ENCODE measurements at regions of chr11 and their contacts with region 1.

Region 1: DNA sequence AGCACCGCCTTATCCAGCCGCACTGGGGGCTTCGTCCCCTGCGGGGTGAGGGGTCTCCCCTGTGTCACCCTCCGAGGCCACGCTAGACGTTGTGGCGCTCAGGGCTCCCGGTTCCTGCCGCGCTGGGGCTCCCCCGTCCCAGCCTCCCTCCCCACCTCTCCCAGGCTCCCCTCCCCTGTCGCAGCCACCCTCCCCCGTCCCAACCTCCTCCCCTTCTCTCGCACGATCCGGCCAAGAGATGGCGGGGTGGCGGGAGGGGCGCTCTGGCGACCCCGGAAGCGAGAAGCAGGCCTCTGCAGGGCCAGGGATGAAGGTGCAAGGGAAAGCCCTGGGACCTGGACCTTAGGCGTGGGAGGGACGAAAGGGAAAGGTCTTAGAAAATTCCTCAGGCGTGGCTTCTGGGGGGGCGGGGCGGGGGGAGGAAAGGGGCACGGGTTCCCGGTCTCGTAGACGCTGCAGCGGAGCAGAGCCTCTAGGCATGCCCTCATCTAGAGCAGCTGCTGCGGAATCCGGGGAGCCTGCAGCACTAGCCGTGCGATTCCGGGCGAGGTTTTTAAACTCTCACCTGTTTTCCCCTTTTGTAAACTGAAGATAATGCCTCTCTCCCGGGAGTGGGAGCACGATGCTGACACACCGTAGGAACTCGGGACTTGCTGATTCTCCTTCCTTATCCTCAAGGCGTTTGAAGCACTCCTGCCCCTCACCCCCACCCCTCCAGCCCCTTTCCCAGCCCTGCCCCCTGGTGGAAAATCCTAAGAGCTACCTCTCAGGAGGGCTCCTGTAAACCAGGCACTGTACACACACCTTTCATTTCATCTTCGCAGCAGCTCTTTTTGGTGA is 14.4 kb downstream of the KCNJ5 start:
- DNase-seq: peak; percentile 67 to 68
- H3K4me3 ChIP-seq: peak overlapping the region; percentile 74
- H3K27ac ChIP-seq: no peak overlapping the region
- H3K4me1 ChIP-seq: peaks cover 20% of the 10 kb centered on the region
- H3K27me3 ChIP-seq: no peaks in the 10 kb centered on the region
- CTCF ChIP-seq: peak; percentile 75

Region 2: GRCh38 chr11:128924510-128925299 is 19.1 kb after region 1 on chr11:
- CTCF ChIA-PET with region 1: interaction called, 4 read pairs
- POLR2A ChIA-PET with region 1: interaction called, 21 read pairs
- intact Hi-C with region 1: no loop called
- DNase-seq: no peak
- H3K4me3 ChIP-seq: no peak overlapping the region
- H3K27ac ChIP-seq: no peak overlapping the region
- H3K4me1 ChIP-seq: no peaks in the 10 kb centered on the region
- H3K27me3 ChIP-seq: peaks cover 56% of the 10 kb centered on the region
- CTCF ChIP-seq: no peak

Region 3: DNA sequence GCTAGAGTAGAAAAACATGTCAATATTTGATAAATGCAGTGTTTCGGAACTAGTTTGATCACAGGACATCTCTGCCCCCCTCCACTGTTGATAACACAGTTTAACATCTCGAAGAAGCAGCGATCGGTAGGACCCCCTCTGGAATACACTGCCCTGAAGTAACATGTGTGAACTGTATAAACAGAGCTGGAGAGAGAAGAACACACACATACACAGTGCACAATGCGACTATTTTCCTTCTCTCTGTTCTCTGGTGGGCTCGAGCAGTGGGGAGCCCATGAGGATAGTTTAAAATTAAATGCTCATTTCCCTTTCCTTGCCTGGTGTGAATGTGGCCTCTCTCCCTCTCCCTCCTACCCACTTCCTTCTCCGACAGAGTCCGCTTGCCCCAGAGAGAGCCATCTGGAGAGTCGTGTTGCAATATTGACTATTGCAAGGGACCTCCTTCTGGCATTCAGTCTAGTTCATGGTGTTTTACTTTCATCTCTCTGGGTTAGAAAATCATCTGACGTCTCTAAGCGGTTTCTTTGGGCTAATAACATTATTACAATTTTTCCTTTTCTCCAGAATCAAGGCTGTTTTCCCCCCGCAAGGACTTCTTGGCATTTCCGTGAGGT is 418.4 kb after region 1 on chr11:
- CTCF ChIA-PET with region 1: interaction called, 23 read pairs
- POLR2A ChIA-PET with region 1: no interaction called
- intact Hi-C with region 1: no loop called
- DNase-seq: peak in 1 of 2 experiments; percentile 39
- H3K4me3 ChIP-seq: no peak overlapping the region
- H3K27ac ChIP-seq: 0 out of 2 replicates have a peak overlapping the region, but pooled peaks have one; percentile 34
- H3K4me1 ChIP-seq: peaks cover 31% of the 10 kb centered on the region
- H3K27me3 ChIP-seq: no peaks in the 10 kb centered on the region
- CTCF ChIP-seq: no peak

Measured in PC-9 (cell line).